CD4-positive, alpha-beta T cell (primary cell): ENCODE measurements at regions of chr3 and their contacts with region 1.

Region 1: DNA sequence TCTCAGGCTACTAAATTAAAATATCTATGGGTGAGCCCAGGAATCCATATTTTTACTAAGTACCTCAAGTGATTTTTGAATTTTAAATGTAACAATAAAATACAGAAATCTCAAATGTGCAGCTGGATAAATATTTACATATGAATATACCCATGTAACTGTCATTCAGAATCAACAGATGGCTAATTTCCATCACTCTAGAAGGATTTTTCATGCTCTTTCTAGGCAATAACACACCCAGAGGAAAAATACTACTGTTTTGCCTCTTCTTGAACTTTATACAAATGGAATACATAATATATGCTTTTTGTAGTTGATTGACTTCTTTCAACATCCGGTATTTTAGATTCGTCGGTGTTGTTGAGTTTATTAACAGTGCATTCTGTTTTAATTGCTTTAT is 601.3 kb upstream of the NECTIN3 start:
- DNase-seq: no peak
- ATAC-seq: no peak
- H3K4me3 ChIP-seq: no peak overlapping the region
- H3K4me3 Mint-ChIP-seq: no peak overlapping the region
- H3K27ac ChIP-seq: no peak overlapping the region
- H3K27ac Mint-ChIP-seq: no peak overlapping the region
- H3K4me1 ChIP-seq: no peaks in the 10 kb centered on the region
- H3K4me1 Mint-ChIP-seq: no peaks in the 10 kb centered on the region
- H3K27me3 ChIP-seq: no peaks in the 10 kb centered on the region
- H3K27me3 Mint-ChIP-seq: peaks cover 17% of the 10 kb centered on the region
- CTCF ChIP-seq: no peak

Region 2: GRCh38 chr3:110530902-110531301 is 60.6 kb after region 1 on chr3:
- CTCF ChIA-PET with region 1: no interaction called
- POLR2A ChIA-PET with region 1: no interaction called
- intact Hi-C with region 1: loop called in 1 of 2 experiments (anchors 2 kb)
- DNase-seq: no peak
- ATAC-seq: no peak
- H3K4me3 ChIP-seq: no peak overlapping the region
- H3K4me3 Mint-ChIP-seq: no peak overlapping the region
- H3K27ac ChIP-seq: no peak overlapping the region
- H3K27ac Mint-ChIP-seq: no peak overlapping the region
- H3K4me1 ChIP-seq: no peaks in the 10 kb centered on the region
- H3K4me1 Mint-ChIP-seq: no peaks in the 10 kb centered on the region
- H3K27me3 ChIP-seq: no peaks in the 10 kb centered on the region
- H3K27me3 Mint-ChIP-seq: peaks cover 10% of the 10 kb centered on the region
- CTCF ChIP-seq: no peak